ENCODE measurements at regions of chr10 and their contacts with region 1.

Region 1: GRCh38 chr10:93074147-93074596 is 479 bp downstream of the CYP26A1 start:
- DNase-seq: no peak
- H3K4me3 ChIP-seq: peak overlapping the region in 1 of 3 donors; percentile 13
- H3K27ac ChIP-seq: no peak overlapping the region
- H3K4me1 ChIP-seq: peaks cover 26 to 33% of the 10 kb centered on the region in 2 donors
- H3K27me3 ChIP-seq: peaks cover 23% of the 10 kb centered on the region
- CTCF ChIP-seq: no peak
- POLR2A ChIP-seq: no peak

Region 2: DNA sequence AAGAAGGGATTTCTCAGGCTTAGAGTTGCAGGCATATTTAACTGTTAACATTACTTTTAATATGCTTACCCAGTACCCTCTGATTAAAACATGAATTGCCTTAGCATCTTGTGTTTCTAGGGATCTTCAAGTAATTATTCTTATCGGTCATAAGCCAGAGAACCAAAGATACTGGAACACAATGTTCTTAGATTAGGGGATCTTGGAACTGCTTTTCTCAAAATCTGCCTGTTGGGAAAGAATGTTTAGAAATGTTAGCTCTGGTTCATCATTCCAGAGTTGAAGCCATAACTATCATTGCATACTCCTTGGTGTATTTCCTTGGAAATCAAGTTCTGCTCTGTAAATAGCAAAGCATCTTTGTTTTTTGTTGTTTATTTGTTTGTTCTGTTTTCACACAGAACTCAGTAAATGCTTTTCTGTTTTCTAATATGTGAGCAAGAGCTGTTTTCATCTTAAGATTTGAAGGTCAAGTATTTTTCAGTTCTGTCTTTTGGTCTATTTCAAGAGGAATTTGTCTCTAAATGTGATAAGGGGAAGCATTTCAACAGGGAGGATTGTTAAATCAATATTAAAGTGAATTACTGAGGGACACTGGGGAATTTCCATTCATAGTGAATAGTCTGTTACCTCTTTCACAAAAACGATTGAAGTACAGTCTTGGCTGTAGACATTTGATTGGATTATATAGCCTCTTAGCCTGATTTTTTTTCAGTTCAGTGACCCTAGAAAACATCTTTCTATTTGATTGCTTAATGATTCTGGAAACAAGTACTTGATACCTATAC is 116.8 kb before region 1 on chr10:
- intact Hi-C with region 1: no loop called
- DNase-seq: no peak
- H3K4me3 ChIP-seq: no peak overlapping the region
- H3K27ac ChIP-seq: no peak overlapping the region
- H3K4me1 ChIP-seq: no peaks in the 10 kb centered on the region
- H3K27me3 ChIP-seq: no peaks in the 10 kb centered on the region
- CTCF ChIP-seq: no peak
- POLR2A ChIP-seq: no peak

Region 3: GRCh38 chr10:93173967-93174845 is 100.0 kb after region 1 on chr10:
- intact Hi-C with region 1: no loop called
- DNase-seq: peak in 1 of 2 donors; percentile 27
- H3K4me3 ChIP-seq: no peak overlapping the region
- H3K27ac ChIP-seq: no peak overlapping the region
- H3K4me1 ChIP-seq: peaks cover 0 to 6% of the 10 kb centered on the region in 2 donors
- H3K27me3 ChIP-seq: no peaks in the 10 kb centered on the region
- CTCF ChIP-seq: no peak
- POLR2A ChIP-seq: no peak

Region 4: GRCh38 chr10:93352638-93353383 is 278.6 kb after region 1 on chr10:
- intact Hi-C with region 1: loop called (anchors 10 kb)
- DNase-seq: peak in 1 of 2 donors; percentile 12
- H3K4me3 ChIP-seq: no peak overlapping the region
- H3K27ac ChIP-seq: no peak overlapping the region
- H3K4me1 ChIP-seq: no peaks in the 10 kb centered on the region
- H3K27me3 ChIP-seq: no peaks in the 10 kb centered on the region
- CTCF ChIP-seq: peak; percentile 40 to 81 (median 62)
- POLR2A ChIP-seq: no peak

Measured in thyroid gland (tissue), 4 donors.